K562 (cell line): ENCODE measurements at regions of chr3 and their contacts with region 1.

Region 1: GRCh38 chr3:15815696-15816095 is 17.9 kb upstream of the ANKRD28 start:
- DNase-seq: peak in 1 of 4 experiments; percentile 34
- ATAC-seq: peak; percentile 43; the same call in 1 of the 3 replicates
- H3K4me3 ChIP-seq: no peak overlapping the region
- H3K27ac ChIP-seq: no peak overlapping the region
- H3K4me1 ChIP-seq: no peaks in the 10 kb centered on the region
- H3K27me3 ChIP-seq: no peaks in the 10 kb centered on the region
- CTCF ChIP-seq: peak in 1 of 3 experiments; percentile 59; a peak in 2 of 6 replicates
- EP300 ChIP-seq: no peak
- POLR2A ChIP-seq: no peak
- RAD21 ChIP-seq: peak; percentile 64 to 82

Region 2: GRCh38 chr3:16177962-16178627 is 362.4 kb after region 1 on chr3:
- CTCF ChIA-PET with region 1: interaction called, 4 read pairs
- POLR2A ChIA-PET with region 1: interaction called, 3 read pairs
- in situ Hi-C with region 1: loop called (anchors 10 kb)
- intact Hi-C with region 1: loop called (anchors 2 kb)
- DNase-seq: peak; percentile 74 to 90 (median 82)
- ATAC-seq: peak; percentile 97
- H3K4me3 ChIP-seq: no peak overlapping the region
- H3K27ac ChIP-seq: no peak overlapping the region
- H3K4me1 ChIP-seq: peaks cover 0 to 5% of the 10 kb centered on the region in 2 experiments; a peak in 1 of 5 replicates
- H3K27me3 ChIP-seq: peaks cover 17 to 55% of the 10 kb centered on the region in 2 experiments
- CTCF ChIP-seq: peak; percentile 94 to 97 (median 96)
- EP300 ChIP-seq: no peak
- POLR2A ChIP-seq: no peak
- RAD21 ChIP-seq: peak; percentile 94